ENCODE measurements at regions of chr6 and their contacts with region 1.

Region 1: DNA sequence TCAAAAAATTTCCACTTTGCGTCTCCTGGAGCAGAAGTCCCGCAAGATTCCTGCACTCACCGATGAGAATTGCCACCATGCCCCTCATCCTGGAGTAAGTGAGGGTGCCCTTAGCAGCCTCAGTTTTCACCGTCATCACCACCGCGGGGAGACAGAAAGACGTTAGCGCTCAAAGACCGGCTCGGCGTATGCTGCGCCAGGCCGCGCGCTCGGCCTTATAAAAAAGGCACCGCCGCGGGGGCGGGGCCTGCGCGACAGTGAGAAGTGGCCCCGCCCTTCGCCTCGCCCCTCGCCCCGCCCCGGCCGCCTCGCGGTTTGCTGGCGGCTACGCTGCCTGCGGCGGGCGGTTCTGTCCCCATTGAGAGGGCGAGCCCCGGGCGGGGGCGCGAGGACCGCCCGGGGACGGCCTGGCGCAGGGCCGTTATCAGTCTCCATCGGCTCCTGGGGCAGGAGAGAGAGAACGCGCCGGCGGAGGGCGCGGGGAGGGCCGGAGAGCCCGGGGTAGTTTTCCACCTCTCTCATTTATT is 122.3 kb upstream of the SLC2A12 start:
- DNase-seq: peak; percentile 94 to 97 (median 95)
- ATAC-seq: peak; percentile 87 to 95 (median 89)
- H3K4me3 ChIP-seq: peak overlapping the region; percentile 72 to 96 (median 80)
- H3K27ac ChIP-seq: peak overlapping the region; percentile 96 to 99 (median 98)
- H3K4me1 ChIP-seq: peaks cover 0 to 68% (median 45%) of the 10 kb centered on the region in 12 donors
- H3K27me3 ChIP-seq: no peaks in the 10 kb centered on the region
- CTCF ChIP-seq: no peak
- POLR2A ChIP-seq: peak; percentile 88 to 99

Region 2: DNA sequence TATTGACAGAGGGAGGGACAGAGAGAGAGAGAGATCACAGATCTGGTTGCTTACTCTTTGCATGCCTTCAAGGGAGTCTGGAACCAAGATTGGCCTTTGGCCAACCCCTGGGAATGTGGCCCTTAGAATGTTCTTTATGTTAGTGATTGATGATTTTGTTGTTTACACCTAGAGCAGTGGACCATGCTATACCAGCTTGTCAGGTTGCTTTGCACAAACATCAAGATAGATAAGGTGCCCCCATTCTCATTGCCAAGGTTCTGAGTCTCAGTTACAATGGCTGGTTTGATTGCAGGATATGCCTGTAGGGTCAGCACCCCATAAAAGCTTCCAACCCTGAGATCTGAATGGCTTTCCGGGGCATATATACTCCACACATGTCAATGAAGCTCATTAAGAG is 68.8 kb before region 1 on chr6:
- intact Hi-C with region 1: no loop called
- DNase-seq: no peak
- ATAC-seq: no peak
- H3K4me3 ChIP-seq: no peak overlapping the region
- H3K27ac ChIP-seq: no peak overlapping the region
- H3K4me1 ChIP-seq: no peaks in the 10 kb centered on the region
- H3K27me3 ChIP-seq: no peaks in the 10 kb centered on the region
- CTCF ChIP-seq: no peak
- POLR2A ChIP-seq: no peak

Region 3: GRCh38 chr6:134235937-134236751 is 61.4 kb after region 1 on chr6:
- intact Hi-C with region 1: loop called in 1 of 10 experiments (anchors 5 kb)
- DNase-seq: no peak
- ATAC-seq: peak in 2 of 4 donors; percentile 22 to 55
- H3K4me3 ChIP-seq: no peak overlapping the region
- H3K27ac ChIP-seq: peak overlapping the region in 1 of 12 donors; percentile 77
- H3K4me1 ChIP-seq: peaks cover 0 to 58% (median 15%) of the 10 kb centered on the region in 12 donors
- H3K27me3 ChIP-seq: no peaks in the 10 kb centered on the region
- CTCF ChIP-seq: no peak
- POLR2A ChIP-seq: no peak

Region 4: DNA sequence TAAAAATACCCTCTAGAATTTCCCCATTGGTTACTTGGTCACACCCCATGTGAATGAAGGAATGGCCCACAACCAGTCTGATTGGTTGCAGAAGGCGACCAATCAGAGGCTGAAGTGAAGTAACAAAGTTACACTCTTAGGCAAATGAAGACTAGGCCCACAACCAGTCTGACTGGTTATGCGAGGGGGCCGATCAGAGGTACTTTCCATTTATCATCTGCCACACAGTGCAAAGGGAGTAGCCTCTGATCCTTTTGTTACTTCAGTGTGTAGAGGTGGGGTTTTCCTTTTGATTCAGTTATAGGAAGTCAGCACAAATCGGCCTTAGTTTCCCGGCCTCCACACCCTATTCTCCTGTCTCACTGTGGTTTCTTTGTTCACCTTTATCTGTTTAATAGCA is 204.4 kb after region 1 on chr6:
- intact Hi-C with region 1: loop called in 1 of 10 experiments (anchors 1 kb)
- DNase-seq: peak in 1 of 5 donors; percentile 27
- ATAC-seq: peak in 3 of 4 donors; percentile 45 to 72 (median 55)
- H3K4me3 ChIP-seq: no peak overlapping the region
- H3K27ac ChIP-seq: peak overlapping the region in 9 of 12 donors; percentile 6 to 56 (median 44)
- H3K4me1 ChIP-seq: peaks cover 0 to 31% (median 0%) of the 10 kb centered on the region in 12 donors
- H3K27me3 ChIP-seq: no peaks in the 10 kb centered on the region
- CTCF ChIP-seq: no peak
- POLR2A ChIP-seq: no peak

Region 5: GRCh38 chr6:134529921-134530320 is 355.2 kb after region 1 on chr6:
- intact Hi-C with region 1: loop called in 2 of 10 experiments (anchors 5 to 10 kb)
- DNase-seq: no peak
- ATAC-seq: no peak
- H3K4me3 ChIP-seq: no peak overlapping the region
- H3K27ac ChIP-seq: no peak overlapping the region
- H3K4me1 ChIP-seq: peaks cover 0 to 39% (median 16%) of the 10 kb centered on the region in 12 donors
- H3K27me3 ChIP-seq: no peaks in the 10 kb centered on the region
- CTCF ChIP-seq: no peak
- POLR2A ChIP-seq: no peak

Region 6: GRCh38 chr6:134720353-134721059 is 545.8 kb after region 1 on chr6:
- intact Hi-C with region 1: loop called in 6 of 10 experiments (anchors 5 to 10 kb)
- DNase-seq: peak in 3 of 5 donors; percentile 35 to 63 (median 46)
- ATAC-seq: peak; percentile 62 to 85 (median 77)
- H3K4me3 ChIP-seq: no peak overlapping the region
- H3K27ac ChIP-seq: peak overlapping the region; percentile 34 to 83 (median 69)
- H3K4me1 ChIP-seq: peaks cover 5 to 65% (median 46%) of the 10 kb centered on the region in 12 donors
- H3K27me3 ChIP-seq: no peaks in the 10 kb centered on the region
- CTCF ChIP-seq: no peak
- POLR2A ChIP-seq: no peak

Region 7: GRCh38 chr6:134938896-134939295 is 764.2 kb after region 1 on chr6:
- intact Hi-C with region 1: loop called in 2 of 10 experiments (anchors 5 kb)
- DNase-seq: no peak
- ATAC-seq: no peak
- H3K4me3 ChIP-seq: no peak overlapping the region
- H3K27ac ChIP-seq: no peak overlapping the region
- H3K4me1 ChIP-seq: no peaks in the 10 kb centered on the region
- H3K27me3 ChIP-seq: no peaks in the 10 kb centered on the region
- CTCF ChIP-seq: no peak
- POLR2A ChIP-seq: no peak